ENCODE measurements at regions of chr11 and their contacts with region 1.

Region 1: GRCh38 chr11:93543292-93543977 is at the start of gene SMCO4:
- DNase-seq: no peak
- ATAC-seq: peak; percentile 78
- H3K4me3 ChIP-seq: peak within 1 kb of the TSS; percentile 91
- H3K27ac ChIP-seq: peak within 1 kb of the TSS; percentile 45
- H3K4me1 ChIP-seq: peaks cover 12% of the 10 kb centered on the region
- H3K27me3 ChIP-seq: no peaks in the 10 kb centered on the region
- CTCF ChIP-seq: peak; percentile 52 to 90 (median 73)
- EP300 ChIP-seq: no peak
- POLR2A ChIP-seq: peak; percentile 58
- RAD21 ChIP-seq: peak; percentile 82
- polyA plus RNA-seq, gene SMCO4: 3.6 to 8.1 TPM

Region 2: GRCh38 chr11:93288079-93288478 is 255.4 kb before region 1 on chr11:
- CTCF ChIA-PET with region 1: no interaction called
- POLR2A ChIA-PET with region 1: no interaction called
- RAD21 ChIA-PET with region 1: no interaction called
- SMC1A ChIA-PET with region 1: interaction called, 3 read pairs
- in situ Hi-C with region 1: no loop called
- intact Hi-C with region 1: loop called (anchors 5 kb)
- DNase-seq: peak; percentile 44
- ATAC-seq: peak; percentile 40; the same call in 2 of the 3 replicates
- H3K4me3 ChIP-seq: no peak overlapping the region
- H3K27ac ChIP-seq: peak overlapping the region; percentile 5; the same call in 1 of the 2 replicates
- H3K4me1 ChIP-seq: peaks cover 16% of the 10 kb centered on the region
- H3K27me3 ChIP-seq: no peaks in the 10 kb centered on the region
- CTCF ChIP-seq: no peak
- EP300 ChIP-seq: no peak
- POLR2A ChIP-seq: no peak
- RAD21 ChIP-seq: no peak

Region 3: GRCh38 chr11:93512073-93512475 is 31.4 kb before region 1 on chr11:
- CTCF ChIA-PET with region 1: interaction called, 6 read pairs
- POLR2A ChIA-PET with region 1: interaction called, 16 read pairs
- RAD21 ChIA-PET with region 1: interaction called, 21 read pairs
- SMC1A ChIA-PET with region 1: interaction called, 256 read pairs
- in situ Hi-C with region 1: no loop called
- intact Hi-C with region 1: loop called (anchors 1 kb)
- DNase-seq: peak; percentile 64
- ATAC-seq: peak; percentile 90
- H3K4me3 ChIP-seq: no peak overlapping the region
- H3K27ac ChIP-seq: peak overlapping the region; percentile 28
- H3K4me1 ChIP-seq: peaks cover 37% of the 10 kb centered on the region
- H3K27me3 ChIP-seq: no peaks in the 10 kb centered on the region
- CTCF ChIP-seq: no peak
- EP300 ChIP-seq: peak; percentile 86 to 93; a peak in 3 of 4 replicates
- POLR2A ChIP-seq: no peak
- RAD21 ChIP-seq: no peak

Region 4: GRCh38 chr11:93608364-93608763 is 64.9 kb after region 1 on chr11:
- CTCF ChIA-PET with region 1: no interaction called
- POLR2A ChIA-PET with region 1: no interaction called
- RAD21 ChIA-PET with region 1: no interaction called
- SMC1A ChIA-PET with region 1: no interaction called
- in situ Hi-C with region 1: no loop called
- intact Hi-C with region 1: no loop called
- DNase-seq: no peak
- ATAC-seq: peak; percentile 33; the same call in 2 of the 3 replicates
- H3K4me3 ChIP-seq: no peak overlapping the region
- H3K27ac ChIP-seq: no peak overlapping the region
- H3K4me1 ChIP-seq: no peaks in the 10 kb centered on the region
- H3K27me3 ChIP-seq: no peaks in the 10 kb centered on the region
- CTCF ChIP-seq: no peak
- EP300 ChIP-seq: no peak
- POLR2A ChIP-seq: no peak
- RAD21 ChIP-seq: no peak

Region 5: DNA sequence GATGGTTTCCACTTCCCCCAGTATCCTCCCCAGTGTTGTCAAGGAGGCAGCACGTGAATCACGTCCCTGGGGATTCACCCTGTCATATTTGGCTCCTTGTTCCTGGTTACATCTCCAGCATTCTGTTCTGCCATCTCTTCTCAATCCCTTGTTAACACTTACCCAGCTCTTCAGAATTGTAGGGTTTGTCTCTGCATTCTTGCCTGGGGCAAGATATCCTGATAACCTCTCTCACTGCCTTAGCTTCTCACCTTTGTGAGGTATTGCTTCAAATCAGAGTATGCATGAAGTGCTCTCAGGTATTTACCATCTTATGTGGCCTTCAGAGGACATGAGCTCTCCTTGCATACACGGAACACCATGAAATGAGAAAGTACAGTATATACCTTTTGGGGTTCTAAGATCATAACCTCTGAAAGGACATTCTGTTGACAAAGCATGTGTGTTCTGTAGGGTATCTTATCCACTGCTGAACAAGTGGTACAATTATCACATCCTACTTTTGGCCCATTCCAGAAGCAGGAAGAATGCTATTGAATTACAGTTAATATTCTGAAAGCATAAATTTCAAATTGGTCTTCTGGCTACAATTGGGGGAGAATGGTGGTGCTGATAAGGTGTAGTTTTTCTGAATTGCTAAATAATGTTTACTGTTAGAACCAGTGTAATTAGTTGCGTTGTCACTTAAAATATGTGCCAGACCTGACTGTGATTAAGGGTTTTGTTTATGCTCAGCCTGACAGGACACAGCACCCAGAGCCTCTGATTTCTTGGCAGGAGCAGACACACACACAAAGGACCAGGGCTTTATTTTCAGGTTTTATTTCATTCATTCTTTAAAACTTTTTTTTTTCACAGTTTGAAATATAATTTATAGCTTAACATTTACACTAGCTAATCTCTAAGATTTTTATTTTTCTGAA is 274.3 kb after region 1 on chr11:
- CTCF ChIA-PET with region 1: no interaction called
- POLR2A ChIA-PET with region 1: no interaction called
- RAD21 ChIA-PET with region 1: no interaction called
- SMC1A ChIA-PET with region 1: no interaction called
- in situ Hi-C with region 1: no loop called
- intact Hi-C with region 1: no loop called
- DNase-seq: no peak
- ATAC-seq: no peak
- H3K4me3 ChIP-seq: no peak overlapping the region
- H3K27ac ChIP-seq: no peak overlapping the region
- H3K4me1 ChIP-seq: no peaks in the 10 kb centered on the region
- H3K27me3 ChIP-seq: no peaks in the 10 kb centered on the region
- CTCF ChIP-seq: no peak
- EP300 ChIP-seq: no peak
- POLR2A ChIP-seq: no peak
- RAD21 ChIP-seq: no peak

Measured in GM12878 (cell line).